Breast epithelium (tissue), 4 donors: ENCODE measurements at regions of chr9 and their contacts with region 1.

Region 1: GRCh38 chr9:13705918-13706317 is 426.4 kb upstream of the MPDZ start:
- DNase-seq: peak in 1 of 2 donors; percentile 30
- H3K4me3 ChIP-seq: no peak overlapping the region
- H3K27ac ChIP-seq: no peak overlapping the region
- H3K4me1 ChIP-seq: no peaks in the 10 kb centered on the region
- H3K27me3 ChIP-seq: no peaks in the 10 kb centered on the region
- CTCF ChIP-seq: no peak
- POLR2A ChIP-seq: no peak

Region 2: DNA sequence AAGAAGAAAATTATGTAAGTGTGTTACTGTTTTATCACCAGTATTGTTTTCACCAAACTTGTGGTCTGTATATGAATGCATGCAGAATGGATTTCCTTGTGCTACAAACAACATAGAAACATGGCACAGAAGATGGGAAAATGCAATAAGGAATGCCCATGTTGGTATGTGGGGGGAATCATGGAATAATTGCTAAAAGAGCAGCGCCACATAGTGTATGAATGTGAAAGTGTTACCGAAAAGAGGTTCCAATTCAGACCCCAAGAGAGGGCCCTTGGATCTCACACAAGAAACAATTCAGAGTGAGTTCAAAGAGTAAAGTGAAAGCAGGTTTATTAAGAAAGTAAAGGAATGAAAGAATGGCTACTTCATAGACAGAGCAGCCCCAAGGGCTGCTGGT is 1039.1 kb before region 1 on chr9:
- intact Hi-C with region 1: no loop called
- DNase-seq: no peak
- H3K4me3 ChIP-seq: no peak overlapping the region
- H3K27ac ChIP-seq: no peak overlapping the region
- H3K4me1 ChIP-seq: no peaks in the 10 kb centered on the region
- H3K27me3 ChIP-seq: no peaks in the 10 kb centered on the region
- CTCF ChIP-seq: no peak
- POLR2A ChIP-seq: no peak

Region 3: GRCh38 chr9:13628526-13628925 is 77.4 kb before region 1 on chr9:
- intact Hi-C with region 1: no loop called
- DNase-seq: no peak
- H3K4me3 ChIP-seq: no peak overlapping the region
- H3K27ac ChIP-seq: no peak overlapping the region
- H3K4me1 ChIP-seq: no peaks in the 10 kb centered on the region
- H3K27me3 ChIP-seq: no peaks in the 10 kb centered on the region
- CTCF ChIP-seq: no peak
- POLR2A ChIP-seq: no peak

Region 4: DNA sequence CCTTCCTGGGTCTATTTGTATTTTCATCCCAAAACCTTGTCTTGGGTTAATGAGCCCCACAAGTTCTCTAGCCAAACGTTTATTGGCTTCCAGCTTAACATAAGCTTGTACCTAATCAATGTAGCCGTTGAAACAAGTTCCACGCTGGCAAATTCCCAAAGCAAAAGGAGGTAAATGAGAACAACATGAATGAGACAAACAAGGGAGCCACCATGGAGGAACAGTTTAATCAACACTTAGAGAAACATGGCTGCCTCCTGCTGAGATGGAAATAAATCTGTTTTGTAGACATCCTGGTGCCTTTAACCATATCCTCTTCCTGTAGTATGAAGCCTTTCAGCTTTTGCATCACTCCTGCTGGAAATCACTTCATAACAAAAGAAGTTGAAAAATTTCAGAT is 774.6 kb after region 1 on chr9:
- intact Hi-C with region 1: loop called (anchors 5 kb)
- DNase-seq: no peak
- H3K4me3 ChIP-seq: no peak overlapping the region
- H3K27ac ChIP-seq: no peak overlapping the region
- H3K4me1 ChIP-seq: no peaks in the 10 kb centered on the region
- H3K27me3 ChIP-seq: no peaks in the 10 kb centered on the region
- CTCF ChIP-seq: no peak
- POLR2A ChIP-seq: no peak